Common myeloid progenitor, CD34-positive (primary cell): ENCODE measurements at regions of chr12 and their contacts with region 1.

Region 1: DNA sequence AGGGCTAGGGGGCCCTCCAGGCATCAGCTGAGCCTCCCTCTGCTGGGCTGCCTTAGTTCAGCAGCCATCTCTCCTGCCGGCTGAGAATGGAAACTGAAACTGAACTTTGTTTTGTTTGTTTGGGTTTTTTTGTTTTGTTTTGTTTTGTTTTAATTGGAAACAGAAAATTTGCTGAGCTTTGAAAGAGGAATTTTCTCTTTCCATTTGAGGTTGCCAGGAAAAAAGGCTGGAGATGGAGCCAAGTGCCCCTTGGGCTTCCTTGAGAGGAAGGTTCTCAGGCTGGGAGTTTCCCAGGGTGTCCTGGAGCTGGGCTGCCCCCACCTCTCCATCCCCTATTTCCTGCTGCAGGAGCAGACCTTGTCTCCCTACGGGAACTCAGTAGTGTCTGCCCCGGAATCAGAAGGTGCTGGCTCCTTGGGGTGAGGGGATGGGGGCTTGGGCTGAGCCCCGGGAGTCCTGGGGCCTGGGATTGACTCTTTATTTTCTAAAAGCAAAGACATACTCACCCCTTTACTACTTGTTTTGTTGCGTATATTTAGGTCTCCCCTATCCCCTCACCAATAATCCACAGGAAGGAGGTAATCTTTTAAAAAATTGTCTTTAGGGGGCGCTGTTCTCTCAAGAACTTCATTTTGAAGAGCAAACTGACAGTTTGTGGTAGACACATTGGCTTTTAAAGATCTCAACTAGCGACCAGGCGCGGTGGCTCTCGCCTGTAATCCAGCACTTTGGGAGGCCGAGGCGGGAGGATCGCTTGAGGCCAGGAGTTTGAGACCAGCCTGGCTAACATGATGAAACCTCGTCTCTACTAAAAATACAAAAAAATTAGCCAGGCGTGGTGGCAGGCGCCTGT is 21.3 kb upstream of the OASL start:
- DNase-seq: peak; percentile 80 to 91 (median 89)
- H3K4me3 ChIP-seq: peak overlapping the region; percentile 25 to 88 (median 67)
- H3K27ac ChIP-seq: peak overlapping the region; percentile 79 to 88
- H3K4me1 ChIP-seq: peaks cover 0 to 10% (median 6%) of the 10 kb centered on the region in 4 experiments
- H3K27me3 ChIP-seq: no peaks in the 10 kb centered on the region

Region 2: GRCh38 chr12:121072147-121072546 is 11.8 kb after region 1 on chr12:
- CTCF ChIA-PET with region 1: interaction called, 19 read pairs
- POLR2A ChIA-PET with region 1: no interaction called
- DNase-seq: no peak
- H3K4me3 ChIP-seq: no peak overlapping the region
- H3K27ac ChIP-seq: no peak overlapping the region
- H3K4me1 ChIP-seq: no peaks in the 10 kb centered on the region
- H3K27me3 ChIP-seq: no peaks in the 10 kb centered on the region

Region 3: GRCh38 chr12:121095544-121096198 is 35.3 kb after region 1 on chr12:
- CTCF ChIA-PET with region 1: interaction called, 61 read pairs
- POLR2A ChIA-PET with region 1: no interaction called
- DNase-seq: peak; percentile 77 to 87 (median 83)
- H3K4me3 ChIP-seq: peak overlapping the region in 6 of 7 experiments; percentile 11 to 77 (median 53)
- H3K27ac ChIP-seq: no peak overlapping the region
- H3K4me1 ChIP-seq: peaks cover 9 to 39% (median 24%) of the 10 kb centered on the region in 4 experiments
- H3K27me3 ChIP-seq: no peaks in the 10 kb centered on the region

Region 4: GRCh38 chr12:121223292-121224285 is 163.2 kb after region 1 on chr12:
- CTCF ChIA-PET with region 1: interaction called, 13 read pairs
- POLR2A ChIA-PET with region 1: no interaction called
- DNase-seq: peak in 2 of 3 donors; percentile 68 to 70
- H3K4me3 ChIP-seq: no peak overlapping the region
- H3K27ac ChIP-seq: no peak overlapping the region
- H3K4me1 ChIP-seq: peaks cover 3 to 24% (median 21%) of the 10 kb centered on the region in 4 experiments
- H3K27me3 ChIP-seq: no peaks in the 10 kb centered on the region